ENCODE measurements at regions of chr5 and their contacts with region 1.

Region 1: DNA sequence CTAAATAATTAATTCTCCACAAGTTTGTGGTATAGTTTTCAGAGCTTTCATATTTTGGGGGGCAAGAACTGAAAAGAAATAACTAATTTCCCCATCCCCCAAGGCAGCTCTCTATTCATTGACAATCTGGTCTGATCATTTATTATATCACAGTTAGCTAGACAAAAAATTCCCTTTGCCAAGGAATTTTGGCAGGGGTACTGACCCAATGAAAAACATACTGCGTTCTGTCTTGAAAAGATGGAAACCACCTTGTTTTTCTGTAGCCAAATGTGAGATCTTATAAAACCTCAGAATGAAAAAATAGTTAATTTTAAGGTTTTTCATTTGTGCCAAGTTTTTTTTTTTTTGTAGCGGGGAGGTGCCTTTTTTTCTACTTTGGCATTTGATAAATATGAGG is 1008.9 kb downstream of the EFNA5 start:
- DNase-seq: no peak
- H3K4me3 ChIP-seq: no peak overlapping the region
- H3K27ac ChIP-seq: no peak overlapping the region
- H3K4me1 ChIP-seq: 0 out of 2 replicates have a peak, but pooled peaks cover 4% of the 10 kb centered on the region
- H3K27me3 ChIP-seq: no peaks in the 10 kb centered on the region
- CTCF ChIP-seq: no peak

Region 2: GRCh38 chr5:106493910-106494309 is 168.0 kb before region 1 on chr5:
- CTCF ChIA-PET with region 1: no interaction called
- POLR2A ChIA-PET with region 1: no interaction called
- intact Hi-C with region 1: no loop called
- DNase-seq: no peak
- H3K4me3 ChIP-seq: no peak overlapping the region
- H3K27ac ChIP-seq: no peak overlapping the region
- H3K4me1 ChIP-seq: no peaks in the 10 kb centered on the region
- H3K27me3 ChIP-seq: no peaks in the 10 kb centered on the region
- CTCF ChIP-seq: no peak

Region 3: GRCh38 chr5:106578736-106579135 is 83.1 kb before region 1 on chr5:
- CTCF ChIA-PET with region 1: no interaction called
- POLR2A ChIA-PET with region 1: interaction called, 11 read pairs
- intact Hi-C with region 1: no loop called
- DNase-seq: no peak
- H3K4me3 ChIP-seq: no peak overlapping the region
- H3K27ac ChIP-seq: no peak overlapping the region
- H3K4me1 ChIP-seq: no peaks in the 10 kb centered on the region
- H3K27me3 ChIP-seq: no peaks in the 10 kb centered on the region
- CTCF ChIP-seq: no peak

Region 4: DNA sequence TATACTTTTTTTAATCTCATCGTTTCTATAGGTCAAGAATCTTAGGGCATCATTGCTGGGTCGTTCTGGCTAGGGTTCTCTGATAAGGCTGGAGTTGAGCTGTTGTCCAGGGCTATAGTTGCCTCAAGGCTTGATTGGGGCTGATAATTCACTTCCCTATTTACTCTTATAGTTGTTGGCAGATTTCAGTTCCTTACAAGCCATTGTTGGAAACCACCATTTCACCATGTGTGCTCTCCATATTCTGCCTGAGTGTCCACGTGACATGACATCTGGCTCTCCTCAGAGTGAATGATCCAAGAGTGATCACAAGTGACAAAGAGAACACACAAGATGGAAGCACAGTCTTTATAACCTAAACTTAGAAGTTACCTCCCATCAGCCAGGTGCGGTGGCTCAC is 156.7 kb after region 1 on chr5:
- CTCF ChIA-PET with region 1: no interaction called
- POLR2A ChIA-PET with region 1: no interaction called
- intact Hi-C with region 1: no loop called
- DNase-seq: no peak
- H3K4me3 ChIP-seq: no peak overlapping the region
- H3K27ac ChIP-seq: no peak overlapping the region
- H3K4me1 ChIP-seq: no peaks in the 10 kb centered on the region
- H3K27me3 ChIP-seq: no peaks in the 10 kb centered on the region
- CTCF ChIP-seq: no peak

Measured in PC-9 (cell line).